PC-9 (cell line): ENCODE measurements at regions of chr20 and their contacts with region 1.

Region 1: GRCh38 chr20:62010551-62011402 is 54.9 kb downstream of the TAF4 start:
- DNase-seq: peak in 1 of 2 experiments; percentile 57
- H3K4me3 ChIP-seq: no peak overlapping the region
- H3K27ac ChIP-seq: no peak overlapping the region
- H3K4me1 ChIP-seq: no peaks in the 10 kb centered on the region
- H3K27me3 ChIP-seq: no peaks in the 10 kb centered on the region
- CTCF ChIP-seq: peak; percentile 93

Region 2: DNA sequence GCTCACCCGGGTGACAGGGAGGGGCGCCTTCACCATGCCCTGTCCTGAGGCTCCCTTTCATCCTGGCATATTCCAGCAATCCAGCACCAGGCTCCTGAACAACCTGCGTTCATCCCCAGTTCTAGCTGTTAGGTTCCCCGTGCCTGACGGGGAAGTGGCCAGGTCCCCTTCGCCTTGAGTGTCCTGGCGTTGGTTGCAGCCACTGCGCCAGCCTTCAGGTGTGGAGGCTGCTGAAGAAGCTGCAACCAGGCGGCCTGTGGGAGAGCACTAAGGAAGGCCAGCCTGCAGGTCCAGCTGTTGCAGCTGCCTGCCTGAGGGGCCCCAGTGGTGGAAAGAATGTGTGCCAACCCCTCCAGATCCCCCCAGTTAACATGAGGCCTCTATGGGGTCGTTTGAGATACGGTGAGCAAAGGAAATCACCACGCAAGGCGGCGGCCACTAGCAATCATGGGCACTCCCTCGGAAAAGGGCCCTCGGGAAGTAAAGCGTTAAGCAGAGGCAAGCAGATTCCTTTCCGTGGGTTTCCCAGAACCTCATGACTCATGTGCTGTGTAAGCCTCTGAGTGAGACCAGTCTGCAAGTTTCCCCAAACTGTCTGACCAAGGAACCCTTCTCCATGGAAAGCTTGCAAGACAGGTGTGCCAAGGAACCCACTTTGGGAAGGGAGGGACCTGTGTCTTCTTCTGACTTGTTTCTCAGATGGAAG is 265.9 kb before region 1 on chr20:
- CTCF ChIA-PET with region 1: no interaction called
- POLR2A ChIA-PET with region 1: no interaction called
- intact Hi-C with region 1: no loop called
- DNase-seq: no peak
- H3K4me3 ChIP-seq: no peak overlapping the region
- H3K27ac ChIP-seq: no peak overlapping the region
- H3K4me1 ChIP-seq: no peaks in the 10 kb centered on the region
- H3K27me3 ChIP-seq: peaks cover 85% of the 10 kb centered on the region
- CTCF ChIP-seq: no peak

Region 3: GRCh38 chr20:62121776-62122631 is 111.2 kb after region 1 on chr20 and contains the start of gene LSM14B:
- CTCF ChIA-PET with region 1: no interaction called
- POLR2A ChIA-PET with region 1: interaction called, 4 read pairs
- intact Hi-C with region 1: loop called (anchors 5 kb)
- DNase-seq: peak; percentile 86 to 99
- H3K4me3 ChIP-seq: peak within 1 kb of the TSS; percentile 80
- H3K27ac ChIP-seq: peak within 1 kb of the TSS; percentile 95
- H3K4me1 ChIP-seq: peaks cover 15% of the 10 kb centered on the region
- H3K27me3 ChIP-seq: peaks cover 29% of the 10 kb centered on the region
- CTCF ChIP-seq: no peak
- total RNA-seq, gene LSM14B: 61.5 and 67.2 TPM in 2 replicates

Region 4: GRCh38 chr20:62136283-62137091 is 125.7 kb after region 1 on chr20:
- CTCF ChIA-PET with region 1: interaction called, 3 read pairs
- POLR2A ChIA-PET with region 1: no interaction called
- intact Hi-C with region 1: loop called (anchors 1 kb)
- DNase-seq: peak; percentile 64 to 68
- H3K4me3 ChIP-seq: no peak overlapping the region
- H3K27ac ChIP-seq: no peak overlapping the region
- H3K4me1 ChIP-seq: peaks cover 10% of the 10 kb centered on the region
- H3K27me3 ChIP-seq: no peaks in the 10 kb centered on the region
- CTCF ChIP-seq: peak; percentile 92

Region 5: GRCh38 chr20:62167474-62167873 is 156.7 kb after region 1 on chr20:
- CTCF ChIA-PET with region 1: interaction called, 18 read pairs
- POLR2A ChIA-PET with region 1: no interaction called
- intact Hi-C with region 1: no loop called
- DNase-seq: no peak
- H3K4me3 ChIP-seq: no peak overlapping the region
- H3K27ac ChIP-seq: no peak overlapping the region
- H3K4me1 ChIP-seq: no peaks in the 10 kb centered on the region
- H3K27me3 ChIP-seq: no peaks in the 10 kb centered on the region
- CTCF ChIP-seq: no peak

Region 6: GRCh38 chr20:62266340-62266739 is 255.6 kb after region 1 on chr20:
- CTCF ChIA-PET with region 1: no interaction called
- POLR2A ChIA-PET with region 1: no interaction called
- intact Hi-C with region 1: loop called (anchors 10 kb)
- DNase-seq: no peak
- H3K4me3 ChIP-seq: no peak overlapping the region
- H3K27ac ChIP-seq: no peak overlapping the region
- H3K4me1 ChIP-seq: no peaks in the 10 kb centered on the region
- H3K27me3 ChIP-seq: no peaks in the 10 kb centered on the region
- CTCF ChIP-seq: no peak

Region 7: GRCh38 chr20:62407221-62407992 is 396.6 kb after region 1 on chr20 and contains the start of gene CABLES2:
- CTCF ChIA-PET with region 1: no interaction called
- POLR2A ChIA-PET with region 1: no interaction called
- intact Hi-C with region 1: loop called (anchors 10 kb)
- DNase-seq: peak; percentile 85 to 96
- H3K4me3 ChIP-seq: peak within 1 kb of the TSS; percentile 72
- H3K27ac ChIP-seq: no peak within 1 kb of the TSS
- H3K4me1 ChIP-seq: peaks cover 18% of the 10 kb centered on the region
- H3K27me3 ChIP-seq: no peaks in the 10 kb centered on the region
- CTCF ChIP-seq: peak; percentile 35; the same call in 1 of the 2 replicates
- total RNA-seq, gene CABLES2: 11.2 and 14.1 TPM in 2 replicates